ENCODE measurements at regions of chr10 and their contacts with region 1.

Region 1: DNA sequence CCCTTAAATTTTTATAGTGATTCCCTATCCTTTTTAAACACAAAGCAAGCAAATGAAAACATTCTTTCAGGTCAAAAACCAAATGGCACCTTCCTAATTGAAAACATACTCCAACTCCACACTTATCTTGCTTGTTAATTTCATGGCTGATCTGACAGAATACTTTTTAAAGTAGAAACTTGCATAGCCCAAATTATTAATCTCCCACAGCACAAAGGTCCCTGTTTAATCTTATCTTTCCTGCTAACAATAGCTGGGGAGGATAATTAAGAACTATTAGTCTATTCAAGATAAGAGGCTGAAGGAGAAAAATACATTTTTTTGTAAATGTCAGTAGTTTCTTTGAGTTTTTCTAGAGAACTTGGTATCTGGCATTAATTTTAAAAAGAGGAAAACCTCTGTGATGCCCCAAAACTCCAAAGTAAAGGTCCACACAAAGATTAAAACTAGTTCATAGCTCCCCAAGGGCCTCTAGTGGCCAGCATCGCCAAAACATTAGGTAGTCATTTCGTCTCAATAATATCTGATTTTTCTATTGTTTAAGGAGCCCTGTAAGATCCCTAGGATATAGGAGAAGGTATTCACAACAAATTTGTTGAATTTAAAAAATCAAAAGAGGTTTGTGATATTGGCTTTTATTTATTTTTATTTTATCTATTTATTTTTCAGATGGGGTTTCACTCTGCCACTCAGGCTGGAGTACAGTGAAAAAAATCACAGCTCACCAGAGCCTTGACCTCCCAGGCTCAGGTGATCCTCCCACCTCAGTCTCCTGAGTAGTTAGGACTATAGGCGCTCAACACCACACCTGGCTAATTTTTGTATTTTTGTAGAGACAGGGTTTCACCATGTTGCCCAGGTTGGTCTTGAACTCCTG is 14.7 kb downstream of the CDNF start:
- DNase-seq: peak; percentile 60
- H3K4me3 Mint-ChIP-seq: no peak overlapping the region
- H3K27ac Mint-ChIP-seq: no peak overlapping the region
- H3K4me1 Mint-ChIP-seq: peaks cover 11% of the 10 kb centered on the region
- H3K27me3 Mint-ChIP-seq: peaks cover 16% of the 10 kb centered on the region
- CTCF ChIP-seq: peak; percentile 69

Region 2: DNA sequence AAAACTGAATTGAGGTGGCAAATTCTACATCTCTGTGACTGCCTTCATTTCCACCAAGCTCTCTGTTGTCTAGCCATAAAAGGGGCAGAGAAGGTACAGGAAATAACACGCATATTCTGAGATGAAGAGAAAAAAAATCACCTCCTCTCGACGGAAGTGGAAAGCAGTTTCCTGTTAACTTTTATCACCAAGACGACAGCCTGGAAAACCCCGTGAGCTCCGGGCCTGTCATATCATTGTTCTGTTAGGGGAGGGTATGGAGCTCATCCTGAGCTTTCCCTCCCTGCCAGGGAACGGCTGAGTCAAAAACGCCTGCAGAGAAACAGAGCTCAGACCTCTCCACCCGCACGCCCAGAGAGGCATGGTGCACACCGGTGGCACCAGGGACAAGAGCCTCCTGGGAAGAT is 1036.1 kb before region 1 on chr10:
- CTCF ChIA-PET with region 1: interaction called, 3 read pairs
- POLR2A ChIA-PET with region 1: no interaction called
- intact Hi-C with region 1: loop called (anchors 10 kb)
- DNase-seq: no peak
- H3K4me3 Mint-ChIP-seq: no peak overlapping the region
- H3K27ac Mint-ChIP-seq: no peak overlapping the region
- H3K4me1 Mint-ChIP-seq: no peaks in the 10 kb centered on the region
- H3K27me3 Mint-ChIP-seq: no peaks in the 10 kb centered on the region
- CTCF ChIP-seq: no peak

Region 3: DNA sequence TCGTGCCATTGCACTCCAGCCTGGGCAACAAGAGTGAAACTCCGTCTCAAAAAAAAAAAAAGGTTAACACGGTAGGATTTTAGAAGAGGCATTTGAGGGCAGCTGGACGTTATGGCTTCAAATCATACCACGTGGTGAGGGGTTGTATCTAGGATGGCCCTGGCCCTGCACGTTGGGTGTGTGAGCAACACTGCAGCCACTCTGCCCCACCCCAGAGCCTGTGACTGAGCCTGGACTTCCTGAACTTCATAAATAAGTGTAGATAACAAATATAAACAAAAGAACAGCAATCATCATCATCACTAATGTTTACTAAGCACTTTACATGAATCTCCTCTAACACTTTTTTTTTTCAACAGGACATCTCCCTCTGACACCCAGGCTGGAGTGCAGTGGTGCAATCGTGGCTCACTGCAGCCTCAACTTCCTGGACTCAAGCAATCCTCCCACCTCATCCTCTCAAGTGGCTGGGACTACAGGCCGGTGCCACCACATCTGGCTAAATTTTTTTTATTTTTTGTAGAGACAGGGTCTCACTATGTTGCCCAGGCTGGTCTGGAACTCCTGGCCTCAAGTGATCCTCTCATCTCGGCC is 322.8 kb before region 1 on chr10:
- CTCF ChIA-PET with region 1: interaction called, 28 read pairs
- POLR2A ChIA-PET with region 1: no interaction called
- intact Hi-C with region 1: loop called (anchors 1 kb)
- DNase-seq: no peak
- H3K4me3 Mint-ChIP-seq: no peak overlapping the region
- H3K27ac Mint-ChIP-seq: no peak overlapping the region
- H3K4me1 Mint-ChIP-seq: no peaks in the 10 kb centered on the region
- H3K27me3 Mint-ChIP-seq: peaks cover 11% of the 10 kb centered on the region
- CTCF ChIP-seq: no peak

Region 4: GRCh38 chr10:14545827-14546226 is 277.3 kb before region 1 on chr10:
- CTCF ChIA-PET with region 1: interaction called, 10 read pairs
- POLR2A ChIA-PET with region 1: interaction called, 3 read pairs
- intact Hi-C with region 1: no loop called
- DNase-seq: no peak
- H3K4me3 Mint-ChIP-seq: no peak overlapping the region
- H3K27ac Mint-ChIP-seq: no peak overlapping the region
- H3K4me1 Mint-ChIP-seq: no peaks in the 10 kb centered on the region
- H3K27me3 Mint-ChIP-seq: no peaks in the 10 kb centered on the region
- CTCF ChIP-seq: no peak

Region 5: GRCh38 chr10:14705548-14706230 is 117.4 kb before region 1 on chr10:
- CTCF ChIA-PET with region 1: no interaction called
- POLR2A ChIA-PET with region 1: no interaction called
- intact Hi-C with region 1: no loop called
- DNase-seq: no peak
- H3K4me3 Mint-ChIP-seq: no peak overlapping the region
- H3K27ac Mint-ChIP-seq: no peak overlapping the region
- H3K4me1 Mint-ChIP-seq: no peaks in the 10 kb centered on the region
- H3K27me3 Mint-ChIP-seq: no peaks in the 10 kb centered on the region
- CTCF ChIP-seq: no peak

Region 6: GRCh38 chr10:14772399-14772798 is 50.7 kb before region 1 on chr10:
- CTCF ChIA-PET with region 1: no interaction called
- POLR2A ChIA-PET with region 1: no interaction called
- intact Hi-C with region 1: no loop called
- DNase-seq: no peak
- H3K4me3 Mint-ChIP-seq: no peak overlapping the region
- H3K27ac Mint-ChIP-seq: no peak overlapping the region
- H3K4me1 Mint-ChIP-seq: no peaks in the 10 kb centered on the region
- H3K27me3 Mint-ChIP-seq: no peaks in the 10 kb centered on the region
- CTCF ChIP-seq: no peak

Region 7: GRCh38 chr10:14837757-14838581 is 14.9 kb after region 1 on chr10 and contains the starts of genes CDNF, HSPA14 and MSANTD7:
- CTCF ChIA-PET with region 1: interaction called, 19 read pairs
- POLR2A ChIA-PET with region 1: interaction called, 7 read pairs
- intact Hi-C with region 1: no loop called
- DNase-seq: peak; percentile 99
- H3K4me3 Mint-ChIP-seq: peak within 1 kb of the TSS; percentile 76
- H3K27ac Mint-ChIP-seq: peak within 1 kb of the TSS; percentile 91
- H3K4me1 Mint-ChIP-seq: no peaks in the 10 kb centered on the region
- H3K27me3 Mint-ChIP-seq: no peaks in the 10 kb centered on the region
- CTCF ChIP-seq: no peak
- total RNA-seq, gene CDNF: 1.9 and 2.9 TPM in 2 replicates
- total RNA-seq, gene HSPA14: 12.1 and 14.0 TPM in 2 replicates
- total RNA-seq, gene MSANTD7: 17.2 and 18.1 TPM in 2 replicates

Region 8: DNA sequence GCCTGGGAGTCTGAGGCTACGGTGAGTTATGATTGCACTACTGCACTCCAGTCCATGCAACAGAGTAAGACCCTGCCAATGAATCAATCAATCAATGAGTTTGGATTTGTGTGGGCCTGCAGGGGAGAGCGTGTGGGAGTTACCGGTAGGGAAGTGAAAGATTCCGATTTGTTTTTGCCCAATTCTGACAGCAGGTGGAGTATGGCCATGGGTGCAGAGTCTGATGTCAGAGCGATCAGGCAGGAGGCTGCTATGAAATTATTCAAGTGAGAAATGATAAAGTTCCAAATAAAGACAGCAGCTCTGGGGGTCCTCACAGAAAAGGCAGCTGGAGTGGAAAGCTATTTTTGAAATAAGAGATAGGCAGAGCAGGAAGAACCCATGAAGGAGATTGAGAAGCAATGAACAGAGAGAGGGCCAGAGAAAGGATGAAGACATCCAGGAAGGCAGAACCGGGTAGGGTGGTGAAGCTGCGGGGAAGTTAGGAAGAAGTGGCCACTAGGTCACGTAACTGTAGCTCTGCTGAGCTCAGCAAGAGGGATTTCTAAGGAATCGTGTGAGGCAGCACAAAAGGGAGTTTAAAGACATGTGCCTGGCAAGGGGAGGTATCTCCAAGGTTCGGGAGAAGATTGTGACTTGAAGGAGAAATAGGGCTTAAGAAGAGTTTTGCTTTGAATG is 439.1 kb after region 1 on chr10:
- CTCF ChIA-PET with region 1: no interaction called
- POLR2A ChIA-PET with region 1: no interaction called
- intact Hi-C with region 1: no loop called
- DNase-seq: peak; percentile 19
- H3K4me3 Mint-ChIP-seq: no peak overlapping the region
- H3K27ac Mint-ChIP-seq: no peak overlapping the region
- H3K4me1 Mint-ChIP-seq: no peaks in the 10 kb centered on the region
- H3K27me3 Mint-ChIP-seq: no peaks in the 10 kb centered on the region
- CTCF ChIP-seq: peak; percentile 18